ENCODE measurements at regions of chr11 and their contacts with region 1.

Region 1: DNA sequence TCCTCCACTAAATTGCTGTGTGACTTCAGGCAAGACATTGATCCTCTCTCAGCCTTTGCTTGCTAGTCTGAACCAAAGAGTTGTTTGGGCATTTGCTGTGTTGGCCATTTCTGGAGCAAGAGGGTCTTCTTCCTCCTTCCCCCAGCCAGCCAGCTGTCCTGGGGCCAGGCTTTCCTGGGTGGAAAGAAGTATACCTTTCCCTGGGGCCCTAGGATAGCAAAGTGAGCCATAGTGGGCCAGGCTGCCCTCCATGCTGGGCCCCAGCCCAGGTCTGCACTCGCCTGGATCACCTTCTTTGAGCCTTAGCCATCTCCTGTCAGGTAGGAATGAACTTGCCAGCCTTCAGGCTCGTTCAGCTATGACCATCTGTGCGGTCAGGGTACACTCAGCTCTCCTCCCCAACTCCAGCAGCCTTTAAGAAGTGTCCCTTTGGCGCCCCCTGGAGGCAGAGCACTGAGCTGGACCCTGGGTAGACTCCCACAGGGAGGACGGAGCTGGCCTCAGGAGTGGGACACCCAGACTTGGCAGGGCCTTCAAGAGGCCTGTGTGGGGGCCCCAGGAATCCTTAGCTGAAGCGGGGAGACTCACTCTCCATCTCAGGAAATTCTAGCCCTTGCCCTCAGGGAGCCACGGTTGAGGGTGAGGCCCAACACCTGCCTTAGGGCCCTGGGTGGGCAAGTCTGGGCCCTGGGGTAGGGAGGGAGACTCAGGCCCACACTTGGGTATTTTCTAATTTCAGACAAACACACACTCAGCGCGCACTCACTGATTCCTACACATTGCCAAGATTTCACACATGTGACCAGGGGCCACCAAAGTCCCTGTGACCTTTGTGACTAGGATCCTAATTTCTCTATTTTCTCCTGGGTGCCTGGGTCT is 35.6 kb upstream of the TPBGL start:
- DNase-seq: peak; percentile 89
- H3K4me3 Mint-ChIP-seq: no peak overlapping the region
- H3K27ac Mint-ChIP-seq: no peak overlapping the region
- H3K4me1 Mint-ChIP-seq: no peaks in the 10 kb centered on the region
- H3K27me3 Mint-ChIP-seq: peaks cover 6% of the 10 kb centered on the region

Region 2: GRCh38 chr11:75133976-75134375 is 70.9 kb before region 1 on chr11:
- CTCF ChIA-PET with region 1: interaction called, 155 read pairs
- POLR2A ChIA-PET with region 1: no interaction called
- DNase-seq: no peak
- H3K4me3 Mint-ChIP-seq: no peak overlapping the region
- H3K27ac Mint-ChIP-seq: no peak overlapping the region
- H3K4me1 Mint-ChIP-seq: no peaks in the 10 kb centered on the region
- H3K27me3 Mint-ChIP-seq: peaks cover 22% of the 10 kb centered on the region

Region 3: GRCh38 chr11:75142714-75143419 is 62.1 kb before region 1 on chr11:
- CTCF ChIA-PET with region 1: interaction called, 155 read pairs
- POLR2A ChIA-PET with region 1: interaction called, 6 read pairs
- DNase-seq: peak; percentile 82
- H3K4me3 Mint-ChIP-seq: peak overlapping the region; percentile 33
- H3K27ac Mint-ChIP-seq: peak overlapping the region; percentile 85
- H3K4me1 Mint-ChIP-seq: peaks cover 45% of the 10 kb centered on the region
- H3K27me3 Mint-ChIP-seq: peaks cover 8% of the 10 kb centered on the region

Region 4: GRCh38 chr11:75150879-75151278 is 54.0 kb before region 1 on chr11 and contains the start of gene SLCO2B1:
- CTCF ChIA-PET with region 1: interaction called, 155 read pairs
- POLR2A ChIA-PET with region 1: no interaction called
- DNase-seq: no peak
- H3K4me3 Mint-ChIP-seq: no peak within 1 kb of the TSS
- H3K27ac Mint-ChIP-seq: no peak within 1 kb of the TSS
- H3K4me1 Mint-ChIP-seq: peaks cover 10% of the 10 kb centered on the region
- H3K27me3 Mint-ChIP-seq: peaks cover 15% of the 10 kb centered on the region
- total RNA-seq, gene SLCO2B1: 0.37 TPM in 1 of 2 experiments, not detected in the other

Region 5: GRCh38 chr11:75174781-75175370 is 30.0 kb before region 1 on chr11:
- CTCF ChIA-PET with region 1: interaction called, 12 read pairs
- POLR2A ChIA-PET with region 1: no interaction called
- DNase-seq: peak; percentile 49
- H3K4me3 Mint-ChIP-seq: no peak overlapping the region
- H3K27ac Mint-ChIP-seq: peak overlapping the region; percentile 88
- H3K4me1 Mint-ChIP-seq: peaks cover 25% of the 10 kb centered on the region
- H3K27me3 Mint-ChIP-seq: peaks cover 1% of the 10 kb centered on the region

Region 6: DNA sequence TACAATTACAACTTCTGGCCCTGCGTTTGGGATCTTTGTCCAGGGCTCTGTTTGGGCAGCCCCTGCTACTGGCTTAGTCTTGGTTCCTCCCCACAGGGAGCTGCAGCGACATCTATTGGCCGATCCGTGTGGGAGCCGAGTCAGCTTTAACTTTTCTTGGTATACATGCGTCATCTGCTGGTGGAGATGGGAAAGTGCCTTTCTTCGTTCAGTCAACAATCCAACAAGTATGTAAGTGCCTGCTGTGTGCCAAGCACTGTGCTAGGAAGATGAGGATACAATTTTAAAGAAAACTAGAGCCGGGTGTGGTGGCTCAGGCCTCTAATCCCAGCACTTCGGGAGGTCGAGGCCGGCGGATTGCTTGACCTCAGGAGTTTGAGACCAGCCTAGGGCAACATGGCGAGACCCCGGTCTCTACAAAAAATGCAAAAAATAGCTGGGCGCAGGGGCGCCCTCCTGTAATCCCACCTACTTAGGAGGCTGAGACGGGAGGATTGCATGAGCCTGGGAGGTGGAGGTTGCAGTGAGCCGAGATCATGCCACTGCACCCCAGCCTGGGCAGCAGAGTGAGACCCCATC is 43.9 kb after region 1 on chr11:
- CTCF ChIA-PET with region 1: interaction called, 19 read pairs
- POLR2A ChIA-PET with region 1: no interaction called
- DNase-seq: peak; percentile 91
- H3K4me3 Mint-ChIP-seq: no peak overlapping the region
- H3K27ac Mint-ChIP-seq: no peak overlapping the region
- H3K4me1 Mint-ChIP-seq: peaks cover 3% of the 10 kb centered on the region
- H3K27me3 Mint-ChIP-seq: peaks cover 31% of the 10 kb centered on the region

Region 7: GRCh38 chr11:75286826-75287465 is 82.0 kb after region 1 on chr11:
- CTCF ChIA-PET with region 1: no interaction called
- POLR2A ChIA-PET with region 1: no interaction called
- DNase-seq: no peak
- H3K4me3 Mint-ChIP-seq: no peak overlapping the region
- H3K27ac Mint-ChIP-seq: peak overlapping the region; percentile 6
- H3K4me1 Mint-ChIP-seq: no peaks in the 10 kb centered on the region
- H3K27me3 Mint-ChIP-seq: no peaks in the 10 kb centered on the region

Measured in activated CD4-positive, alpha-beta T cell treated with anti-CD3 and anti-CD28 coated beads, Interleukin-2, amount 10 ng/mL, durations not matched to agents 7 days and 5 days (primary cell).